Endothelial cell of umbilical vein (primary cell): ENCODE measurements at regions of chr7 and their contacts with region 1.

Region 1: GRCh38 chr7:117014673-117015133 is 61.4 kb downstream of the ST7 start:
- DNase-seq: peak; percentile 59
- H3K4me3 ChIP-seq: no peak overlapping the region
- H3K27ac ChIP-seq: no peak overlapping the region
- H3K4me1 ChIP-seq: peaks cover 8% of the 10 kb centered on the region
- H3K27me3 ChIP-seq: no peaks in the 10 kb centered on the region
- CTCF ChIP-seq: no peak
- POLR2A ChIP-seq: no peak

Region 2: DNA sequence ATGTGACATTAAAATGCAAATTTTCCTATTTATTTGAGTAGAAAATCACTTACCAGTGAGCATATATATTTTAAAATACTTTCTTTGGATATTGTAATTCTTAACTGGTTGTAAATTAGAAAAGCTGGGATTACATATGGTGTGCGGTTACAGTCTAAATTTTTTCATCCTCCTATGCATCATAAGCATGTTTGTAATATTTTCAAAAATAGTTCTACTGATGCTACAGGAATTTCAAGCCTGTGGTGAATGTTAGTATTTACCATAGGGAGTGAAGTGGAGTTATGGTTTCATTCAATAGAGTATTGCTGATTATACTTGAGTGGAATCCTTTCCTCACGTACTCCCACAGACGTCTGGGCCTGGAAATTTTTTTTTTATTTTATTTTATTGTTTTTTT is 96.0 kb before region 1 on chr7:
- CTCF ChIA-PET with region 1: no interaction called
- POLR2A ChIA-PET with region 1: no interaction called
- dilution Hi-C with region 1: no loop called
- intact Hi-C with region 1: no loop called
- DNase-seq: no peak
- H3K4me3 ChIP-seq: no peak overlapping the region
- H3K27ac ChIP-seq: no peak overlapping the region
- H3K4me1 ChIP-seq: no peaks in the 10 kb centered on the region
- H3K27me3 ChIP-seq: no peaks in the 10 kb centered on the region
- CTCF ChIP-seq: no peak
- POLR2A ChIP-seq: no peak

Region 3: GRCh38 chr7:116999311-116999710 is 15.4 kb before region 1 on chr7:
- CTCF ChIA-PET with region 1: interaction called, 19 read pairs
- POLR2A ChIA-PET with region 1: no interaction called
- dilution Hi-C with region 1: no loop called
- intact Hi-C with region 1: no loop called
- DNase-seq: no peak
- H3K4me3 ChIP-seq: no peak overlapping the region
- H3K27ac ChIP-seq: no peak overlapping the region
- H3K4me1 ChIP-seq: no peaks in the 10 kb centered on the region
- H3K27me3 ChIP-seq: no peaks in the 10 kb centered on the region
- CTCF ChIP-seq: no peak
- POLR2A ChIP-seq: no peak

Region 4: DNA sequence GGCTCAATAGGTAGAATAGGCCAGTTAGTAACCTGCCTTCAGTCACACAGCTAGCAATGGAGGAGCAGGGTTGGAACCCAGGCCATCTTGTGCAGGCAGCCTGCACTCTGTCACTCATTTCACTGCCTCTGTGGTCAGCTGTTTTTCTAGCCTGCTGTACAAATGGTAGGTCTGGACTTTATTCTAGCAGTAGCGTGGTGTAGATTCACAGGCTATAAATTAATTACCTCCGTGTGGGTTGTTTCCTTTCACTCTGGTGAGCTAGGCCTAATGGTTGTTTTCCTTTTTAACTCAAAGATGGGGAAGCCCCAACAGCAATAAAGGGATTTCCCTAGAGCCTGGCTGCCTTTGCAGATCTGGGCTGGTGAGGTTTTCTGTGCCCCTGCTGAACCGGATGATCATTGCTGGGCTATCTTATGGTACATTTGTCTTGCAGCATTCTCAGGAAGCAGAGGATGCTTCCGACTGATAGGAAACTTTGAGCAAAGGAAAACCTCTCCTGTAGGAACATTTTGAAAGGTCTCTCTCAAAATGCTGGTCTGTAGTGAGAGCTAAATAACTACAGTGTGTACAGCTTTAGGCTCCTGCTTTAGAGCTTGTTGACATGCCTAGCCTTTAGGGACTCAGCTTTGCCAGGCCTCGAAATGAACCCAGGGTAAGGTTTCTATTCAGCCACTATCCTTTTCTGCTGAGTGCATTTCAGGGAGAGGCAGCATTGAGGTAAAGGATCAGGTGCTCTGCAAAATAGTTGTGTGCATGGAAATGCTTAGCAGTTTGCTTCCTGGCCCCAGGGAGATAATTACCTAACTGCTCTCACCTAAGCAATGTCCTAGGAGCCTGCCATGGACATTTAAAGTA is 96.0 kb after region 1 on chr7:
- CTCF ChIA-PET with region 1: no interaction called
- POLR2A ChIA-PET with region 1: no interaction called
- dilution Hi-C with region 1: no loop called
- intact Hi-C with region 1: no loop called
- DNase-seq: peak; percentile 80
- H3K4me3 ChIP-seq: no peak overlapping the region
- H3K27ac ChIP-seq: no peak overlapping the region
- H3K4me1 ChIP-seq: peaks cover 12% of the 10 kb centered on the region
- H3K27me3 ChIP-seq: no peaks in the 10 kb centered on the region
- CTCF ChIP-seq: no peak
- POLR2A ChIP-seq: no peak

Region 5: GRCh38 chr7:117323851-117324701 is 309.4 kb after region 1 on chr7:
- CTCF ChIA-PET with region 1: no interaction called
- POLR2A ChIA-PET with region 1: no interaction called
- dilution Hi-C with region 1: no loop called
- intact Hi-C with region 1: no loop called
- DNase-seq: peak; percentile 21
- H3K4me3 ChIP-seq: peak overlapping the region; percentile 4 to 56 (median 41)
- H3K27ac ChIP-seq: no peak overlapping the region
- H3K4me1 ChIP-seq: peaks cover 15% of the 10 kb centered on the region
- H3K27me3 ChIP-seq: peaks cover 40 to 53% of the 10 kb centered on the region in 2 experiments
- CTCF ChIP-seq: no peak
- POLR2A ChIP-seq: no peak

Region 6: DNA sequence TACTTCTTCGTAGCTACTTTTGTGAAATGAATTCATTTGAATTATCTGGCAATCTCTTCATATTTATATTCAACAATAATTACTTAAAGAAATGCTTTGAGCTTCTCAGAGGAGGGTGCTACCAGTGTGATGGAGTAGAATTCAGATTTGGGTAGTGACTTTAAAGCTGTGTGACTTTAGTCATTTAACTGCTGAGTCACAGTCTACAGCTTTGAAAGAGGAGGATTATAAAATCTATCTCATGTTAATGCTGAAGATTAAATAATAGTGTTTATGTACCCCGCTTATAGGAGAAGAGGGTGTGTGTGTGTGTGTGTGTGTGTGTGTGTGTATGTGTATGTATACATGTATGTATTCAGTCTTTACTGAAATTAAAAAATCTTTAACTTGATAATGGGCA is 533.3 kb after region 1 on chr7:
- CTCF ChIA-PET with region 1: no interaction called
- POLR2A ChIA-PET with region 1: no interaction called
- dilution Hi-C with region 1: no loop called
- intact Hi-C with region 1: no loop called
- DNase-seq: no peak
- H3K4me3 ChIP-seq: no peak overlapping the region
- H3K27ac ChIP-seq: no peak overlapping the region
- H3K4me1 ChIP-seq: no peaks in the 10 kb centered on the region
- H3K27me3 ChIP-seq: no peaks in the 10 kb centered on the region
- CTCF ChIP-seq: no peak
- POLR2A ChIP-seq: no peak